ENCODE measurements at regions of chr9 and their contacts with region 1.

Region 1: GRCh38 chr9:134983074-134983473 is 65.4 kb upstream of the FCN1 start:
- DNase-seq: peak in 1 of 2 donors; percentile 58
- ATAC-seq: peak in 5 of 8 donors; percentile 44 to 67 (median 53)
- H3K4me3 ChIP-seq: no peak overlapping the region
- H3K27ac ChIP-seq: no peak overlapping the region
- H3K4me1 ChIP-seq: peaks cover 0 to 4% (median 0%) of the 10 kb centered on the region in 9 donors
- H3K27me3 ChIP-seq: peaks cover 0 to 11% (median 5%) of the 10 kb centered on the region in 7 donors
- CTCF ChIP-seq: peak; percentile 31 to 70 (median 55)

Region 2: GRCh38 chr9:134455934-134456739 is 526.9 kb before region 1 on chr9:
- intact Hi-C with region 1: loop called in 1 of 10 experiments (anchors 10 kb)
- DNase-seq: peak; percentile 84 to 91
- ATAC-seq: peak; percentile 84 to 94 (median 90)
- H3K4me3 ChIP-seq: peak overlapping the region in 9 of 10 donors; percentile 21 to 51 (median 39)
- H3K27ac ChIP-seq: peak overlapping the region; percentile 81 to 97 (median 92)
- H3K4me1 ChIP-seq: peaks cover 14 to 46% (median 33%) of the 10 kb centered on the region in 9 donors
- H3K27me3 ChIP-seq: no peaks in the 10 kb centered on the region
- CTCF ChIP-seq: peak in 1 of 9 donors; percentile 15

Region 3: GRCh38 chr9:134704498-134704897 is 278.6 kb before region 1 on chr9:
- intact Hi-C with region 1: loop called in 9 of 10 experiments (anchors 2 to 10 kb)
- DNase-seq: peak in 1 of 2 donors; percentile 1
- ATAC-seq: no peak
- H3K4me3 ChIP-seq: no peak overlapping the region
- H3K27ac ChIP-seq: peak overlapping the region in 4 of 10 donors; percentile 9 to 85 (median 61)
- H3K4me1 ChIP-seq: peaks cover 17 to 53% (median 28%) of the 10 kb centered on the region in 9 donors
- H3K27me3 ChIP-seq: peaks cover 0 to 4% (median 0%) of the 10 kb centered on the region in 7 donors
- CTCF ChIP-seq: no peak

Region 4: GRCh38 chr9:135037521-135038250 is 54.6 kb after region 1 on chr9:
- intact Hi-C with region 1: no loop called
- DNase-seq: no peak
- ATAC-seq: no peak
- H3K4me3 ChIP-seq: no peak overlapping the region
- H3K27ac ChIP-seq: no peak overlapping the region
- H3K4me1 ChIP-seq: no peaks in the 10 kb centered on the region
- H3K27me3 ChIP-seq: peaks cover 0 to 50% (median 30%) of the 10 kb centered on the region in 7 donors
- CTCF ChIP-seq: no peak

Measured in heart right ventricle (tissue), 16 donors.